ENCODE measurements at regions of chr16 and their contacts with region 1.

Region 1: DNA sequence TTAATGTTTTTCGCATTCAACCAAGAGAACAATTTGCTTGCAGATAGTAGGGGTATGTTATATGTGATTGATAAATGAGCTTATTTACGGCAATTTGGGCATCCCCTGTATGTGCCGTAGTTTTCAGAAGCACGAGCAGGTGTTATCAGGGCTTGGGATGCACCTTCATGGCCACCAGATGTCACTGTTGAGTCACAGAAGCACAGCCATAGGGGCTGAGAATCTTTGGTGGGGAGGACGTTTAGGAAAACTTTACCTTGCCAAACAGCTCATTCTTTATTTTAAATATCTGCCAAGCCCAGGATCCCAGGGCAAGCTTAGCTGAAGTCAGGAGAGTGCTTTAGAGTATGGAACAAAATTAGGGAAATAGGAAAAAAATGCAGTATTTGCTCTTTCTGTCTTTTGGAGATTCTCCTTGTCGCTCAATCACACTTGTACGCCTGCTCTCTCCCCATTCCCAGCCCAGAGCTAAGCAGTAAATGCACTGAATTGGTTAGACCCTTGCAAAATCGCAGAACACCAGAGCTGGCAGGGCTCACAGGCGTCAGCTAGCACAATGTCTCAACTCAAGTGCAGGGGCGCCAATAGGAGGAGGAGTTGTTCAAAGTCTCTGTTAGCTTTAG is 93.6 kb upstream of the MPHOSPH6 start:
- DNase-seq: peak; percentile 60
- H3K4me3 Mint-ChIP-seq: no peak overlapping the region
- H3K27ac Mint-ChIP-seq: no peak overlapping the region
- H3K4me1 Mint-ChIP-seq: no peaks in the 10 kb centered on the region
- H3K27me3 Mint-ChIP-seq: peaks cover 11% of the 10 kb centered on the region

Region 2: GRCh38 chr16:81987706-81988105 is 275.9 kb before region 1 on chr16:
- CTCF ChIA-PET with region 1: no interaction called
- POLR2A ChIA-PET with region 1: no interaction called
- intact Hi-C with region 1: no loop called
- DNase-seq: no peak
- H3K4me3 Mint-ChIP-seq: no peak overlapping the region
- H3K27ac Mint-ChIP-seq: no peak overlapping the region
- H3K4me1 Mint-ChIP-seq: no peaks in the 10 kb centered on the region
- H3K27me3 Mint-ChIP-seq: peaks cover 5% of the 10 kb centered on the region

Region 3: GRCh38 chr16:82105107-82105506 is 158.5 kb before region 1 on chr16:
- CTCF ChIA-PET with region 1: no interaction called
- POLR2A ChIA-PET with region 1: no interaction called
- intact Hi-C with region 1: no loop called
- DNase-seq: no peak
- H3K4me3 Mint-ChIP-seq: no peak overlapping the region
- H3K27ac Mint-ChIP-seq: no peak overlapping the region
- H3K4me1 Mint-ChIP-seq: no peaks in the 10 kb centered on the region
- H3K27me3 Mint-ChIP-seq: peaks cover 3% of the 10 kb centered on the region

Region 4: GRCh38 chr16:82248677-82249076 is 15.0 kb before region 1 on chr16:
- CTCF ChIA-PET with region 1: interaction called, 12 read pairs
- POLR2A ChIA-PET with region 1: no interaction called
- intact Hi-C with region 1: no loop called
- DNase-seq: no peak
- H3K4me3 Mint-ChIP-seq: no peak overlapping the region
- H3K27ac Mint-ChIP-seq: no peak overlapping the region
- H3K4me1 Mint-ChIP-seq: no peaks in the 10 kb centered on the region
- H3K27me3 Mint-ChIP-seq: peaks cover 3% of the 10 kb centered on the region

Region 5: GRCh38 chr16:82311528-82311927 is 47.9 kb after region 1 on chr16:
- CTCF ChIA-PET with region 1: no interaction called
- POLR2A ChIA-PET with region 1: no interaction called
- intact Hi-C with region 1: no loop called
- DNase-seq: no peak
- H3K4me3 Mint-ChIP-seq: no peak overlapping the region
- H3K27ac Mint-ChIP-seq: no peak overlapping the region
- H3K4me1 Mint-ChIP-seq: no peaks in the 10 kb centered on the region
- H3K27me3 Mint-ChIP-seq: peaks cover 5% of the 10 kb centered on the region

Region 6: DNA sequence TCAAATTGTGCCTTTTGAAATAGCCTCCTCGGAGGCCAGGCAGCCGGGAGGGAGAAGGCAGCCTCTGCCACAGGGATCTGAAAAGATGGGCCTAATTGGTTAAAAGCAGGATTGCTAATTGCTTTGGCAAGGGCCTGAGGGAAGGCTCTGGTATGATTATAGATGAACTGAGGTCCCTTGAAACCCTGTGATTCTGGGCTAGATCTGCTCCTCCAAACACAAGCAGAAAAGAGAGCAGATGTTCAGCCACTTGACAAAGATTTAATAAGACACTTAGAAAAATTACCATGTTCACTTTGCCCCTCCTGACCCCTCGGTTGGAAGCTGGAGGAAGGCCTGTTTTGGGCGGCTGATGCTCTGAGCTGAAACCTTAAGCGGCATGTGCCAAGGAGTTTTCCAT is 115.9 kb after region 1 on chr16:
- CTCF ChIA-PET with region 1: no interaction called
- POLR2A ChIA-PET with region 1: no interaction called
- intact Hi-C with region 1: no loop called
- DNase-seq: no peak
- H3K4me3 Mint-ChIP-seq: no peak overlapping the region
- H3K27ac Mint-ChIP-seq: no peak overlapping the region
- H3K4me1 Mint-ChIP-seq: no peaks in the 10 kb centered on the region
- H3K27me3 Mint-ChIP-seq: no peaks in the 10 kb centered on the region

Region 7: GRCh38 chr16:82456683-82457082 is 193.1 kb after region 1 on chr16:
- CTCF ChIA-PET with region 1: interaction called, 29 read pairs
- POLR2A ChIA-PET with region 1: no interaction called
- intact Hi-C with region 1: loop called (anchors 1 kb)
- DNase-seq: peak; percentile 46
- H3K4me3 Mint-ChIP-seq: no peak overlapping the region
- H3K27ac Mint-ChIP-seq: no peak overlapping the region
- H3K4me1 Mint-ChIP-seq: no peaks in the 10 kb centered on the region
- H3K27me3 Mint-ChIP-seq: peaks cover 7% of the 10 kb centered on the region

Region 8: GRCh38 chr16:82639666-82640336 is 376.2 kb after region 1 on chr16:
- CTCF ChIA-PET with region 1: interaction called, 11 read pairs
- POLR2A ChIA-PET with region 1: no interaction called
- intact Hi-C with region 1: no loop called
- DNase-seq: peak; percentile 62
- H3K4me3 Mint-ChIP-seq: no peak overlapping the region
- H3K27ac Mint-ChIP-seq: no peak overlapping the region
- H3K4me1 Mint-ChIP-seq: peaks cover 12% of the 10 kb centered on the region
- H3K27me3 Mint-ChIP-seq: no peaks in the 10 kb centered on the region

Region 9: GRCh38 chr16:83441517-83441916 is 1177.9 kb after region 1 on chr16:
- CTCF ChIA-PET with region 1: interaction called, 11 read pairs
- POLR2A ChIA-PET with region 1: no interaction called
- intact Hi-C with region 1: no loop called
- DNase-seq: no peak
- H3K4me3 Mint-ChIP-seq: no peak overlapping the region
- H3K27ac Mint-ChIP-seq: no peak overlapping the region
- H3K4me1 Mint-ChIP-seq: no peaks in the 10 kb centered on the region
- H3K27me3 Mint-ChIP-seq: no peaks in the 10 kb centered on the region